ENCODE measurements at regions of chr18 and their contacts with region 1.

Region 1: DNA sequence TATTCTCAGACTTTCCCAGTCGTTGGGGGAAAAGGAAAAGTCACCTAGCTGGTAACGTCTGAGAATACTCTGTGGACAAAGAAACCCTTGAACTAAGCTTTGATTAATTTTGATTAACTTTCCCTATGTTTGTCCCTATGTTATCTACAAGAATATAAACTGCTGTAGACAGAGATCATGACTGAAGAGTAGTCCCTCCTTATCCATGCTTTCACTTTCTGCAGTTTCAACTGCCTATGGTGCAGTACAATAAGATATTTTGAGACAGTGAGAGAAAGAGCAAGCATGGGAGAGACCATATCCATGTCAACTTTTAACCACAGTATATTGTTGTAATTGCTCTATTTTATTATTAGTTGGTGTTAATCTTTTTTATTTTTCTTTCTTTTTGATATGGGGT is 31.8 kb downstream of the TXNL1 start:
- DNase-seq: no peak
- ATAC-seq: no peak
- H3K4me3 ChIP-seq: no peak overlapping the region
- H3K4me3 Mint-ChIP-seq: no peak overlapping the region
- H3K27ac ChIP-seq: no peak overlapping the region
- H3K27ac Mint-ChIP-seq: no peak overlapping the region
- H3K4me1 ChIP-seq: no peaks in the 10 kb centered on the region
- H3K4me1 Mint-ChIP-seq: no peaks in the 10 kb centered on the region
- H3K27me3 ChIP-seq: no peaks in the 10 kb centered on the region
- H3K27me3 Mint-ChIP-seq: no peaks in the 10 kb centered on the region
- CTCF ChIP-seq: no peak

Region 2: GRCh38 chr18:55897091-55897689 is 709.4 kb before region 1 on chr18:
- CTCF ChIA-PET with region 1: no interaction called
- POLR2A ChIA-PET with region 1: no interaction called
- intact Hi-C with region 1: no loop called
- DNase-seq: no peak
- ATAC-seq: no peak
- H3K4me3 ChIP-seq: no peak overlapping the region
- H3K4me3 Mint-ChIP-seq: no peak overlapping the region
- H3K27ac ChIP-seq: no peak overlapping the region
- H3K27ac Mint-ChIP-seq: no peak overlapping the region
- H3K4me1 ChIP-seq: no peaks in the 10 kb centered on the region
- H3K4me1 Mint-ChIP-seq: no peaks in the 10 kb centered on the region
- H3K27me3 ChIP-seq: no peaks in the 10 kb centered on the region
- H3K27me3 Mint-ChIP-seq: peaks cover 5% of the 10 kb centered on the region
- CTCF ChIP-seq: no peak

Region 3: DNA sequence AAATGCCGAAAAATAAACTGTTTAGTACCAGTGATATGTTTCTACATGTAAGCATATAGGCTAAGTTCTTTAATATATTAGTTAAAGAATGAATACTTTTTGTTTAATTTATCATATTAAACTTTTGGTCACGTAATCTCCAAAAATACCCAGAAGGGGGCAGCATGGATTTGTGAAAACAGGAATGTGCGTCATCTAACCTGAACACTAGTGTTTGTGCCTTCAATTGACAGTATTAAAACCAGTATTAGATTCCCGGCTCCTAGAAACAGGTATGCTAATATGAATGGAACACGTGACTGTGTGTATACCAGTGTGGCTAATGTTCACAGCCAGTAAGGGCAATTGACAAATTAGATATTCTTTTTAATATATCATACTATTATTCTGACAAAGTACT is 96.3 kb after region 1 on chr18:
- CTCF ChIA-PET with region 1: no interaction called
- POLR2A ChIA-PET with region 1: no interaction called
- intact Hi-C with region 1: loop called in 1 of 2 experiments (anchors 5 kb)
- DNase-seq: peak in 6 of 14 experiments; percentile 3 to 52 (median 46)
- ATAC-seq: no peak
- H3K4me3 ChIP-seq: no peak overlapping the region
- H3K4me3 Mint-ChIP-seq: no peak overlapping the region
- H3K27ac ChIP-seq: no peak overlapping the region
- H3K27ac Mint-ChIP-seq: no peak overlapping the region
- H3K4me1 ChIP-seq: no peaks in the 10 kb centered on the region
- H3K4me1 Mint-ChIP-seq: no peaks in the 10 kb centered on the region
- H3K27me3 ChIP-seq: no peaks in the 10 kb centered on the region
- H3K27me3 Mint-ChIP-seq: no peaks in the 10 kb centered on the region
- CTCF ChIP-seq: peak; percentile 64

Region 4: DNA sequence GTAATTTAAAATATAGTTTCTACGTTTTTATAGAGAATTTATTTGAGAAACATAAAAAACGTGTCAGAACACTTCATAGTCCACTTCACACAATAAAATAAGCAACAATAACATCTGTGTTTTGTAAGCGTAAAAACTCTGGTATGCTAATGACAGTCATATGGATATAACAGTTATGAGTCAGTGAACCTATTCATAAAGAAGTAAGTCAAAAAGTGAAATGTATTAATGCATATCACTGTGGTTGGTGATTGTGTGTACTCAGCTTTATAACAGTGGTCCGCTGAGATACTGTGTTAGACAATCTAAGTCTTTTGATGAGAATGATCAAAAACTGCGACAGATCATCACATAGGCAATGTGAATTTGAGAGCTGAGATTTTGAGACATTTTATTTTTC is 197.8 kb after region 1 on chr18:
- CTCF ChIA-PET with region 1: no interaction called
- POLR2A ChIA-PET with region 1: no interaction called
- intact Hi-C with region 1: no loop called
- DNase-seq: no peak
- ATAC-seq: no peak
- H3K4me3 ChIP-seq: no peak overlapping the region
- H3K4me3 Mint-ChIP-seq: no peak overlapping the region
- H3K27ac ChIP-seq: no peak overlapping the region
- H3K27ac Mint-ChIP-seq: no peak overlapping the region
- H3K4me1 ChIP-seq: no peaks in the 10 kb centered on the region
- H3K4me1 Mint-ChIP-seq: no peaks in the 10 kb centered on the region
- H3K27me3 ChIP-seq: no peaks in the 10 kb centered on the region
- H3K27me3 Mint-ChIP-seq: no peaks in the 10 kb centered on the region
- CTCF ChIP-seq: no peak